ENCODE measurements at regions of chr4 and their contacts with region 1.

Region 1: GRCh38 chr4:98467627-98468072 is 190.8 kb downstream of the TSPAN5 start:
- DNase-seq: peak; percentile 74
- H3K4me3 ChIP-seq: peak overlapping the region; percentile 46 to 54; a peak in 3 of 4 replicates
- H3K27ac ChIP-seq: peak overlapping the region in 1 of 2 experiments; percentile 71; a peak in 2 of 4 replicates
- H3K4me1 ChIP-seq: peaks cover 0 to 4% of the 10 kb centered on the region in 2 experiments; a peak in 2 of 4 replicates
- H3K27me3 ChIP-seq: no peaks in the 10 kb centered on the region
- CTCF ChIP-seq: peak; percentile 86
- EP300 ChIP-seq: no peak
- RAD21 ChIP-seq: peak; percentile 92

Region 2: GRCh38 chr4:98055800-98056501 is 411.7 kb before region 1 on chr4:
- CTCF ChIA-PET with region 1: no interaction called
- POLR2A ChIA-PET with region 1: no interaction called
- DNase-seq: no peak
- H3K4me3 ChIP-seq: no peak overlapping the region
- H3K27ac ChIP-seq: no peak overlapping the region
- H3K4me1 ChIP-seq: no peaks in the 10 kb centered on the region; a peak in 1 of 4 replicates
- H3K27me3 ChIP-seq: no peaks in the 10 kb centered on the region
- CTCF ChIP-seq: no peak
- EP300 ChIP-seq: no peak
- RAD21 ChIP-seq: no peak

Region 3: GRCh38 chr4:98411731-98412130 is 55.9 kb before region 1 on chr4:
- CTCF ChIA-PET with region 1: no interaction called
- POLR2A ChIA-PET with region 1: no interaction called
- DNase-seq: no peak
- H3K4me3 ChIP-seq: no peak overlapping the region
- H3K27ac ChIP-seq: no peak overlapping the region
- H3K4me1 ChIP-seq: no peaks in the 10 kb centered on the region
- H3K27me3 ChIP-seq: no peaks in the 10 kb centered on the region
- CTCF ChIP-seq: no peak
- EP300 ChIP-seq: no peak
- RAD21 ChIP-seq: no peak

Region 4: DNA sequence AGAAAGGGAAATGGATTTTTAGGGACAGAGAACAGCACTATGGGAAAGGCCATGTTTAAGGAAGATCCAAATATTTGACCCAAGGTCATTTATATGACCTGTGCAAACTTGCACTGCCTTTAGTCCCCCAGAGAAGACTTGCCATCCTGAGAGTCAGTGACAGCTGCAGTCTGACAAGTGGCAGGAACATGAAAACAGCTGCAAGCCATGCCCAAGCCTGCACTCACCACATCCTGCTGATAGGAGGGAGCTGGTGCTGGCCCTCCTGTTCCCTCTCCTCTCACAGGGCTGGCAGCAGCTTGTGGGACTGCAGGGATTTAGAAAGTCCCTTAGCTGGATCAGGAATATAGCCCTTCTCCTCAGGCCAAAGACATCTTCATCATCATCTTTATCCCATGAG is 18.7 kb before region 1 on chr4:
- CTCF ChIA-PET with region 1: interaction called, 19 read pairs
- POLR2A ChIA-PET with region 1: no interaction called
- DNase-seq: no peak
- H3K4me3 ChIP-seq: no peak overlapping the region
- H3K27ac ChIP-seq: no peak overlapping the region
- H3K4me1 ChIP-seq: peaks cover 0 to 6% of the 10 kb centered on the region in 2 experiments; a peak in 1 of 4 replicates
- H3K27me3 ChIP-seq: no peaks in the 10 kb centered on the region
- CTCF ChIP-seq: no peak
- EP300 ChIP-seq: no peak
- RAD21 ChIP-seq: no peak

Region 5: DNA sequence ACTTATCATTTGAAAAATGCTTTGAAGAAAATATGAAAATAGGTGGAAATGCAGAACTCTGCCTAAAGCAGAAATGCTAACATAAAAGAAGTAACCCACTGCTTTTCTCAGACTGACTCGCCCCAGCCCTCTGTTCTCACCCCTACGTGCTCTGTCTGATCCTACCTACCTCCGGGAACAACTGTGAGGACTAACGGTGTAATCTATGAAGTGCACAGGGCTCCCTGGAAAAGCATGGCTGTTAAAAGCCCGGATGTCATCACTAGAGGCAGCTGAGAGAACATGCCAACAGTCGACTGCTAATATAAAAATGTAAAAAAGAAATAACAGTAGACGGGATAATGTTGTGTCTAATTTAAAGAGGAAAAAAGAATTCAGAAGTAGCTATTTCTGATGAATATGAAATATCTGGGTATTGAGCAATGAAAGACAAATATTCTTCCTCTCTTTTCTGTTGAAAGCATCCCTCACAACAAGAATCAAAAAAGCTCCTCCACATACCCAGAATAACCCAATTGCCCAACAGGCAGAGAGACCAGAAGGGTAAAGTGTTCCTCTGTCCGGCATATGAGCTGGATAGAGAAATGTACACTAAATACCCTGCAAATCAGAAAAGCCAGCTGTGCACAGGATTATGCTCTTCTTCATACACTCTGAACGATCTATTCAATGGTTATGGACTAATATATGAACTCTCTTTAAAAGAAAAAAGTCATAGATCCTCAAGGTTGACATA is 60.1 kb after region 1 on chr4:
- CTCF ChIA-PET with region 1: interaction called, 13 read pairs
- POLR2A ChIA-PET with region 1: no interaction called
- DNase-seq: no peak
- H3K4me3 ChIP-seq: no peak overlapping the region
- H3K27ac ChIP-seq: no peak overlapping the region
- H3K4me1 ChIP-seq: peaks cover 8 to 28% of the 10 kb centered on the region in 2 experiments
- H3K27me3 ChIP-seq: no peaks in the 10 kb centered on the region
- CTCF ChIP-seq: no peak
- EP300 ChIP-seq: no peak
- RAD21 ChIP-seq: no peak

Region 6: DNA sequence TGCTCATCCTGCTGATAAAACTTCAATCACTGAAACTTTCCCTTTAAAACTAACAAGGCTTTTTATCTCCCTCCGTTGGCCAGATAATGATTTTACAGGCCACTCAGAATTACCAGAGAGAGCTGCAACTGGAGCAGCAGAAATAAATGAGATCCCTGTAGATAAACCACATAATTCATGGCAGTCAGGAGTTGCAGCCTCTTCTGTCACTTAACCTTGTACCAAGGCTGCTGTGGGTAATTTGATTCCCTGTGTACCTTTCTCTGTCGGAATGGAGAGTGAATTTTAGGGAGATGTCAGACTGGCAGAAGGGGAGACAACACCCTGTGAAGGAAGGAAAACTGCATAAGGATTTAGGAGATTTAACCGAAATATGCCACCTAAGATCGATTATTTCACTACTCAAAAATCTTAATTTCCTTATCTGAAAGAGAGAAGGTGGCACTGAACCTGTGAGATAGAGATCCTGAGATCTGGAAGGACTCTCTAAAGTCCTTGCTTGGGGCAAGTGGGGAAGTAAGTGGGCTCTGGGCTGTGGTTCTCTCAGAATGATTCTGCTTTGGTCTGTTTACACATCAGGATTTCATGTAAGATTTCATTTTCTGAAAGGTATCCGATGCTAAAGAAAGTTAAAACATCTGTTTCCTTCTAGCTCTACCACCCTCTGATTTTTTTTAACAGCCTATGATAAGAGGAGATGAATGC is 205.1 kb after region 1 on chr4:
- CTCF ChIA-PET with region 1: interaction called, 18 read pairs
- POLR2A ChIA-PET with region 1: no interaction called
- DNase-seq: peak; percentile 74
- H3K4me3 ChIP-seq: no peak overlapping the region; a peak in 1 of 4 replicates
- H3K27ac ChIP-seq: peak overlapping the region in 1 of 2 experiments; percentile 1; a peak in 1 of 4 replicates
- H3K4me1 ChIP-seq: peaks cover 0 to 16% of the 10 kb centered on the region in 2 experiments; a peak in 2 of 4 replicates
- H3K27me3 ChIP-seq: no peaks in the 10 kb centered on the region
- CTCF ChIP-seq: peak; percentile 26
- EP300 ChIP-seq: peak in 1 of 2 experiments; percentile 83; a peak in 2 of 4 replicates
- RAD21 ChIP-seq: peak; percentile 58

Region 7: GRCh38 chr4:99054428-99054994 is 586.9 kb after region 1 on chr4:
- CTCF ChIA-PET with region 1: interaction called, 26 read pairs
- POLR2A ChIA-PET with region 1: no interaction called
- DNase-seq: no peak
- H3K4me3 ChIP-seq: no peak overlapping the region
- H3K27ac ChIP-seq: no peak overlapping the region
- H3K4me1 ChIP-seq: 0 out of 4 replicates have a peak, but pooled peaks cover 0 to 4% of the 10 kb centered on the region in 2 experiments
- H3K27me3 ChIP-seq: no peaks in the 10 kb centered on the region
- CTCF ChIP-seq: no peak
- EP300 ChIP-seq: no peak
- RAD21 ChIP-seq: no peak